ENCODE measurements at regions of chr11 and their contacts with region 1.

Region 1: DNA sequence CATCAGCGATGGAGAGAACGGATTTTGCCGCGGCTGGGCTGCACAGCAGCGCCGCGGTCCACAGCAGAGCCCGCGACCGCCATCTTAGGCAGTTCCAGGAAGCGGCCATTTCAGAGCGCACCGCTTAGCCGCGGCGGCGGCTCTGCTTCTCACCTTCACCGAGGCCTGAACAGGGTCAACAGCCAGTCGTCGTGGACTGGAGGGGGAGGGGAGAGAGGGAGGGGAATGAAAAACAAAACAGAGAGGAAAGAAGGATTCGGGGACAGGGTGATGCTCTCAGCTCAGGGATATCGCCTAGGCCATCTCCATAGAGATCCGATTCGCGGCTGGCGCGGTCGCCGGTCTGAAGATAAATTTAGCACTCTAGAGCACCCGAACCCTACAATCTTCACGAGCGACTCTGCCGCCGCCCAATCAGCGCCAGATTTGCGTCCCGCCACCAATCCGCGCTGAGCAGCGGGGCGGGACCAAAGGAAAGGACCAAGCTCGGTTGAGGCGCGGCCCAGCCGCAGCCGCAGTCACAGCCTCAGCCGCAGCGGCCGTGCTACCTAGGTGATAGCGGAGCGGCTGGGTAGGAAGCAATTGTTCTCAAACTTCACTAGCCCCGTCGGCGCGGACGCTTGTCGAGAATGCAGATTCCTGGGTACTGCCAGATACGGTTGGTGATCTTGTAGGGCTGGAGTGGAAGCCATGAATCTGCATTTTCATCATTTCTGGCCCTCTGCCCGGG is at the start of gene ZBED5:
- DNase-seq: peak; percentile 98
- ATAC-seq: peak; percentile 99
- H3K4me3 ChIP-seq: peak within 1 kb of the TSS; percentile 83 to 89
- H3K27ac ChIP-seq: peak within 1 kb of the TSS; percentile 96 to 98
- H3K4me1 ChIP-seq: peaks cover 0 to 5% of the 10 kb centered on the region in 2 donors
- H3K27me3 ChIP-seq: no peaks in the 10 kb centered on the region
- total RNA-seq, gene ZBED5: 48.4 to 63.8 TPM

Region 2: DNA sequence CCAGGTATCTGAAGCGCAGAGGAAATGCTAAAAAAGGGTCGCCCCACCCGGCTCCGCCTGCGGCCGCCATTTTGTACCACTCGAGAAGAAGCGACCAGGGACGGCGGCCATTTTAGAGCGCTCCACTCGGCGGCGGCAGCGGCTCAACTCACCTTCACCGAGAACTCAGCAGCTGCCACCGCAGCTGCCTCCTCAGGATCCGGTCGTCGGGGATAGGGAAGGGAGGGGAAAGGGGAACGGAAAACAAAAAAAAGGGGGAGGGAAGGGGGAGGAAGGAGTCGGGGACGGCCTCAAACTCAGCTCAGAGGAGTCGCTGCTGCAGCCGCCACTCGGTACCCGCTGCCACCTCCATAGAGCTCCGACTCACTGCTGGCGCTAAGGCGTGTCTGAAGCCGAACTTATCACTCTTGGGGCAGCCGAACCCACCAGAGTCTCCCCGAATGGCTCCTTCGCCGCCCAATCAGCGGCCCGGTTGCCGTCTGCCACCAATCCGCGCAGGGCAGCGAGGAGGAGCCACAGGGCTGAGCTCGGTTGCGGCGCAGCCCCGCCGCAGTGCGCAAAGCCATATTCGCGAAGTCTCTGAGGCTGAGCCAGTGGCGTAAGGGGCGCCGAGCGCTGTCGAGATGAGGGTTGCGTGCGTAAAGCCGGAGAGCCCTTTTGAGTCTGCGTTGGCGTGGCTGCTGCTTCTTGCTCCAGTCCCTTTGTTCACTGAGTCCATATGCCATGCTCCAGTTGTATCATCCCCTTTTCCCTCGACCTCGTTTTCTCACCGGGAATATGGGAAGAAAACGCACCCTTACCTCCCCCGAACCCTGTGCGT is 49.1 kb before region 1 on chr11 and contains the start of gene EIF4G2:
- intact Hi-C with region 1: loop called (anchors 1 to 5 kb)
- DNase-seq: peak; percentile 99
- ATAC-seq: peak; percentile 98
- H3K4me3 ChIP-seq: peak within 1 kb of the TSS; percentile 88 to 94
- H3K27ac ChIP-seq: peak within 1 kb of the TSS; percentile 72 to 95
- H3K4me1 ChIP-seq: no peaks in the 10 kb centered on the region
- H3K27me3 ChIP-seq: no peaks in the 10 kb centered on the region
- total RNA-seq, gene EIF4G2: 615 to 752 TPM

Region 3: GRCh38 chr11:10899121-10899830 is 41.4 kb after region 1 on chr11:
- intact Hi-C with region 1: loop called (anchors 1 to 5 kb)
- DNase-seq: peak; percentile 74 to 82
- ATAC-seq: peak; percentile 66
- H3K4me3 ChIP-seq: no peak overlapping the region
- H3K27ac ChIP-seq: peak overlapping the region; percentile 94 to 99
- H3K4me1 ChIP-seq: peaks cover 0 to 3% of the 10 kb centered on the region in 2 donors
- H3K27me3 ChIP-seq: no peaks in the 10 kb centered on the region

Region 4: DNA sequence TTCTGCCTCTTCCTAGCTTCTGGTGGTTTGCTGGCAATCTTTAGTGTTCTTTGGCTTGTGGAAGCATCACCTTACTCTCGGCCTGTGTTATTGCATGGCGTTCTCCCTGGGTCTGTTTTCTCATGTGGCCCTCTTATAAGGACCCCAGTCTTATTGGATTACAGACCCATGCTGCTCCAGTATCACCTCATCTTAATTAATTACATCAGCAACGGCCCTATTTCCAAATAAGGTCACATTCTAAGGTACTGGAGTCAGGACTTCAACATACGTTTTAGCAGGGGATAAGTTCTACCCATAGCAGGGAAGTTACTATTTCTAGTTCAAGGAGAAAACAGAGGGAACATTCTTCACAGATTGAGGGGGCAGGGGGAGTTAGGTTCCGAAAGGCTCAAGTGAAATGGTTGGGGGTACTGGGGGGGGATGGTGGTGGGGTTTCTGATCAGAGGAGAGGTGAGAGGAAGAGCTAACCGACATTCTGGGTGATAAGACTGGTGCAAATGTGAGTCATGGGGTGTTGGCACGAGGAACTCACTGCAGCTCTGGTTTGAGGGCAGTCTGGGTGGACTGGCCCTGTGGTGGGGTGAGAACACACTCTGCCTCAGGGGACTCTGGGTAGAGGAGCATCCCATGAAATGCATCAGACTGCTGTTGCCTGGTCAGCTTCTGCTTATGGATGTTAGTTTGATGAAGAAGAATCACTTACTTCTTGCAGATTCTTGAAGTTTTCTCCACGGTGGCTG is 51.4 kb after region 1 on chr11:
- intact Hi-C with region 1: no loop called
- DNase-seq: no peak
- ATAC-seq: no peak
- H3K4me3 ChIP-seq: peak overlapping the region in 1 of 2 donors; percentile 31
- H3K27ac ChIP-seq: no peak overlapping the region
- H3K4me1 ChIP-seq: peaks cover 0 to 7% of the 10 kb centered on the region in 2 donors
- H3K27me3 ChIP-seq: no peaks in the 10 kb centered on the region